Psoas muscle (tissue), 8 donors: ENCODE measurements at regions of chr18 and their contacts with region 1.

Region 1: DNA sequence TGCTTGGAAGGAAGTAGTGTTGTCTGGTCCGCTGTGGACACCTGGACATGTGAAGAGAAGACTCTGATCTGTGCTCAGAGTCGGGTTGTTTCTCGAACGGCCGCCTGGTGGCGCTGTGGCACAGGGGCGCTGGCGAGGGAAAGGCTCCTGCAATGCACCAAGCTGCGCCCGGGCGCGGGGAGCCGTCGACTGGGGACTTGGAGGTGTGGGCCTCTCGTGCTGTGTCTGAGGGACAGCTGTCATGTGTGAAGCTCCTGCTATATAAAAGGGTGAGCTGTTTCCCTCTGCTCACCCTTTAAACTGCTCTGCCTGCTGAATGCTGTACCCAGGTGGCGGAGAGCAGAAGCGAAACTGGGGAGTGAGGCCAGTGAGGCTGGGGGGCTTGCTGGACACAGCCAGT is 44.0 kb downstream of the GNAL start:
- DNase-seq: peak; percentile 82 to 90
- ATAC-seq: peak; percentile 96 to 99 (median 98)
- H3K4me3 ChIP-seq: peak overlapping the region; percentile 55
- H3K27ac ChIP-seq: no peak overlapping the region
- H3K4me1 ChIP-seq: no peaks in the 10 kb centered on the region
- H3K27me3 ChIP-seq: no peaks in the 10 kb centered on the region
- CTCF ChIP-seq: peak; percentile 93

Region 2: GRCh38 chr18:11785458-11786055 is 52.5 kb after region 1 on chr18:
- intact Hi-C with region 1: no loop called
- DNase-seq: no peak
- ATAC-seq: no peak
- H3K4me3 ChIP-seq: no peak overlapping the region
- H3K27ac ChIP-seq: no peak overlapping the region
- H3K4me1 ChIP-seq: no peaks in the 10 kb centered on the region
- H3K27me3 ChIP-seq: no peaks in the 10 kb centered on the region
- CTCF ChIP-seq: no peak

Region 3: DNA sequence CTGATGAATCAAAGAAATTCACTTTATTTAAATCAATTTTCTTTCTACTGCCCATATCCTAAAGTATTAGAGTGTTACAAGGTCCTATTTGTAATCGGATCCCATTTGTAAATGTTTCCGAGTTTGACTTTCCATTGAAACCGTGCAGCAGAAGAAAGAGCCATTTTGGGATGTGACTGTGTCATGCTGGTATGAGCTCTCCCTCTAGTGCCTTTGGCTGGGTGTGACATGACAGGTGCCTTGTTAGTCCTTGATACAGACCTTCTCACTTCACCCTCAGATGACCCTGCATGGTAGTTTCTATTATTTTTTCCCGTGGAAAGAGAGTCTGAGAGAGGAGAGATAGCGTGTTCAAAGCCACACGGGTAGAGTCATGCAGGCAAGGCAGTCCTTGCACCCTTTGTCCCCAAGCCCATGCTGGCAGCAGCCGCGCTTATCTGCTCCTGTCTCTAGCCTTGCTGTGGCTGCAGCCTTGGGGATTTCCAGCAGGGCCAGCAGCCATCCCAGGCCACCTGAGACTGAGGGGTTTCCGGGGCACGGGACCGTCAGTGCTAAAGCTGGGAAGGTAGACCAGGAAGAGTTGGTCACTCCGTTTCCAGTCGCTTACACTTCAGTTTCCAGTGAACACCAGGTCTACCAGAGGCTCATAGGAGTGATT is 139.6 kb after region 1 on chr18:
- intact Hi-C with region 1: loop called (anchors 1 to 2 kb)
- DNase-seq: no peak
- ATAC-seq: peak; percentile 98 to 99 (median 98)
- H3K4me3 ChIP-seq: no peak overlapping the region
- H3K27ac ChIP-seq: peak overlapping the region; percentile 54
- H3K4me1 ChIP-seq: peaks cover 5% of the 10 kb centered on the region
- H3K27me3 ChIP-seq: no peaks in the 10 kb centered on the region
- CTCF ChIP-seq: peak; percentile 60

Region 4: DNA sequence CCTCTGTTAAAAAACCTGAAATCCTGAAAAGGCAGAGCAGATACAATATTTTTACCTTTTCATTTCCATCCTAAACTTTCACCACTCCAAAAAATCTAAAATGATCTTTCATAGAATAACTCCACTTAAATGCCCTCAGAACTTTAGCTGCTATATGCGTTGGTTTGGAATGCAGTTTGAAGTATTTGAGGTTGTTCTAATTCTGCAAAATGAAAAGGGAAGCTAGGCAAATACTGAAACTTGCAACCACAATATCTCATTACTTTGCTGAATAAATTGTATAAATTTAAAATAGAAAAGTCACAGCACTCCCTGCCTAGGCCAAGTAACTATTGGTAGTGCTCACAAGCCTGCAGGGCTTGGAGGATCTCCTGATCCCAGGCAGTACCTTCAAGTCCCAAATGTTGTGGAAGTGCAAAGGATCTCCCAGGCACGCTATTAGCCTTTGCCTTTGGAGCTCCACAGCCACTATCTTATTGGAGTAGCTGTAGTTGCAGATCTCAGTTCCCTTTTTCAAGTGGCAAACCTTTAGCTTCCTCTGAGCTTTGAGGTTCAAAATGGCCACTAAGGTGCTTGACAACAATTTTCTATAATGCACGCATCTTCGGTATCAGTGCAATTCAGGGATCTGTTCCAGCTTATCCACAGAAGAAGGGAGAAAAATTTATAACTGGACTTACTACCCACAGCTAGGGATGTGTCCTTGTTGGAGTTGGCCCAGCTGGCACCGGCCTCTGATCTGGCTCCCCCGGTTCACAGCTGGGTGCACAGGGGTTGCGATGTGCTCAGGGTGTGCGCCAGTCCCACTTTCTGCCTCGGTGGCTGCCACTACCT is 317.2 kb after region 1 on chr18:
- intact Hi-C with region 1: loop called in 1 of 2 experiments (anchors 10 kb)
- DNase-seq: no peak
- ATAC-seq: no peak
- H3K4me3 ChIP-seq: no peak overlapping the region
- H3K27ac ChIP-seq: no peak overlapping the region
- H3K4me1 ChIP-seq: no peaks in the 10 kb centered on the region
- H3K27me3 ChIP-seq: no peaks in the 10 kb centered on the region
- CTCF ChIP-seq: no peak